ENCODE measurements at regions of chr4 and their contacts with region 1.

Region 1: DNA sequence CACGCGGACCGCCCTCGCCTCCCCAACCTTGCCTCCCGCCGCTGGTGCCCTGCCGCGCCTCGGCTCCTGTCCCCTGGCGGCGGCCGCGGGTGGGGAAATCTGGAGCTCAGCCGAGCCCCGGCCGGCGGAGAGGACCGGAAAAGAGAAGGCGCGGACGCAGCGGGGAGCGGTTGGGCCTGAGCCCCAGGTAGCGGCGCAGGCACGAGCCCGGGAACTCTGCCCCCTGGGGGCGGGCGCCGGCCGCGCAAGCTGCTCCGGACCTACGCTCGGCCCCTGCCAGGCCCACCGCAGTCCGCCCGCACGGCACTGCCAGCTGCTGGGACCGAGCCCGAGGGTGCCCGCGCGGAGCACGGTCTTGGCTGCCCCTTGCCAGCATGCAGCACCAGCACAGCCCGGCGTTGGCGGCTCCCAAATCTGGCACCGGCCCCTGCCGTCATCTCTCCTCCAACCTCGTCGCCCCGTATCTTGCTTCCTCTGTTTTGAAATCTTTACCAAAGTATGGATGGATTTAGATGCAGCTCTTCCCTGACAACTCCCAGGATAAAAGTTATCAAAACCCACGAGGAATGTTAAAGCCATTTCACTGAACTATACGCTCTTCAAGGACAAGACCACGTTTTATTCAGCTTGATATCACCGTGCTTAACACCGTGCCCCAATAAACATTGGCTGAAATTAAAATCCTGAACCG is at the start of gene PRSS12:
- DNase-seq: no peak
- H3K4me3 ChIP-seq: peak within 1 kb of the TSS; percentile 73
- H3K27me3 ChIP-seq: no peaks in the 10 kb centered on the region
- CTCF ChIP-seq: peak; percentile 63
- polyA plus RNA-seq, gene PRSS12: 108 and 139 TPM in 2 replicates

Region 2: DNA sequence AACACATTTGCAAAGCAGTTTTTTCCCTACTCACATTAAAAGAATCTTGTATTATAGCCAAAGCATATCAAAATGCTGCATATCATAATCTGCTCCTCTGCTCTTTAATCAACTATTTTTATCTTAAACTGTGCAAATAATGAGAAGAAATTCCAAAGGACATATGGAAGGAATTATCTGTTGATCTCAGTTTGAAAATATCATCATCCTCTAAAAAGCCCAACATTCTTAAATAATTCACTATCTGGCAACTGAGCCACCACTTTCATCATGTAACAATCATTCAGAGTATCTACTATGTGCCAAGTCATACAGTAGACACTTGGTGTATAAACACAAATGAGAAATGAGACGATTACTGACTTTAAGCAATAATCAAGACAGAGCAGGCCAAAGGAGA is 63.2 kb before region 1 on chr4:
- CTCF ChIA-PET with region 1: interaction called, 12 read pairs
- POLR2A ChIA-PET with region 1: no interaction called
- DNase-seq: peak; percentile 95
- H3K4me3 ChIP-seq: no peak overlapping the region
- H3K27me3 ChIP-seq: no peaks in the 10 kb centered on the region
- CTCF ChIP-seq: no peak

Region 3: DNA sequence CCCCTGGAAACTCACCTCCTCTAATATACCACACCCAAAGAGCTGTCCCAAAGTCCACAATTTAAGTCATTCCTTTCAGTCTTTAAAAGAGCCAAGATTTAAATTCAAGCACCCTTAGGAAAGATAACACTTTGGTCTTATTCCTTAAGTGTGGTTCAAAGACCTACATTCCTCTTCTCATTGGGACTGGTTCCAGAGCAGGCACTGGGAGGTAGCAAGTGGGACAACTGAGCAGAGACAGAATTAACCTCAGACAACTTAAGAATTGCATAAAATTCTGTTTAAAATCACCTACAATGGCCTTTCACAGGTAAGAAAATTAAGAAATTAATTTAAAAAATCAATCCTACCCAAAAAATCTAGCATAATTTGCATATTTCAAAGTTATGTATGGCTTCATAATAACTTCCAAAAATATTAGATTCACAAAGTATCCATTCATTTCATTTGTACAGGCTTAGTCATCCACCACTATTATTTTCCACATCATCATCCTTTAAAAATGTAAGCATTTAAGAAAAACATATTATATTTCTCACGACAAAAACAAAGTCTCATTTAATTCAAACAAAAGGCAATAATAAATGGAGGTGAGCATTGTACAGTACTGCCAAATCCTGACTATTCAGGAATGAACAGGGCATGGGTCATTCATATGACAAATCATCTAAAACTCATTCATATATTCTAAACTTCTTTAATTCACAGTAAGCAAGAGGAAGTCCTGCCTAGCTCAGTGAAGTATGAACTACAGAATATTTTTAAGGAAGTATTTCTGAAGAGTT is 13.8 kb before region 1 on chr4:
- CTCF ChIA-PET with region 1: interaction called, 68 read pairs
- POLR2A ChIA-PET with region 1: interaction called, 3 read pairs
- DNase-seq: peak; percentile 53
- H3K4me3 ChIP-seq: no peak overlapping the region
- H3K27me3 ChIP-seq: no peaks in the 10 kb centered on the region
- CTCF ChIP-seq: no peak

Region 4: GRCh38 chr4:118363166-118363565 is 10.2 kb after region 1 on chr4:
- CTCF ChIA-PET with region 1: interaction called, 29 read pairs
- POLR2A ChIA-PET with region 1: interaction called, 15 read pairs
- DNase-seq: no peak
- H3K4me3 ChIP-seq: no peak overlapping the region
- H3K27me3 ChIP-seq: no peaks in the 10 kb centered on the region
- CTCF ChIP-seq: no peak

Region 5: DNA sequence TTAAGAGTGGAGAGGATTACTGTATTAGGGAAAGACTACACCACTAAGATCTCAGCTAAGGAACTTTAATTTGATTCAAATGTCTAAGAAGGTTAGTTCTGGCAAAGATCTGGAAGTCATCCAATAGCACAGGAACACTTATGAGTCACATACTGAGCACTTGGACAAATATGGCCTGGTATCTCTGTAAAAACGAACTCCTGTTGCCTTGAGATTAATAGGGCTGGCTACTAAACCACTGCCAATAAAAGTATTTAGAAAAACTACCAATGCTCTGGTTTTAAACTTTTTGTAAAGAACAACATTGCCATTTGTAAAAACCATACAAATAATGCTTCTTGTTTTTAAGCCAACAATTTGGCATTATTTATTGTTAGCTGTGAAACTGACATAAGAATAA is 412.4 kb after region 1 on chr4:
- CTCF ChIA-PET with region 1: no interaction called
- POLR2A ChIA-PET with region 1: no interaction called
- DNase-seq: peak; percentile 93
- H3K4me3 ChIP-seq: no peak overlapping the region
- H3K27me3 ChIP-seq: no peaks in the 10 kb centered on the region
- CTCF ChIP-seq: no peak

Measured in BJ (cell line).